GM12878 (cell line): ENCODE measurements at regions of chr5 and their contacts with region 1.

Region 1: DNA sequence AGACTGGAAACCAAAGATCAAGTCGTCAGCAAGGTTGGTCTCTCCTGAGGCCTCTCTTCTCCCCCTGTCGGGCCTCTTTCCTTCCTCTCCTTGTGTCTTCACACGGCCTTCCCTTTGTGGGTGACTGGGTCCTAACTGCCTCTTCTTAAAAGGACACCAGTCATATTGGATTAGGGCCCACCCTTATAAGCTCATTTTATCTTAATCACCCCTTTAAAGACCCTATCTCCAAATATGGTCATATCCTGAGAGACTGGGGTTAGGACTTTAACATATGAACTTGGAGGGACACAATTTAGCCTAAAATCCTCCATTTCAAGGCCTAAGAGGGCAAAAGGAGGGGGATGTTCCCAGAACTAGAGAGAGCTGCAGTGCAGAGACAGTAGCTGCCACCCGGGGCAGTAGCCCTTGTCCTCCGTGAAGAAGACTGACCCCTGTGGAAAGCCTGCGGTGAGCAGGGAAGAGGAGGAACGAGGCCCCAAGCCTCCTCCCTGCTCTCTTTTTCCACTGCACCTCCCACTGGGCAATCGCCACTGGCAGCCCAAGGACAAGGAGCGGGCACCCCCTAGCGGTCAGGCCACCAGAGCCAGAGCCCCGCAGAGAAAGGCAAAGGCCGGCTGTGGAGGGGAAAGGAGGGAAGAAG is 34.9 kb downstream of the CFAP90 start:
- DNase-seq: peak; percentile 20
- ATAC-seq: peak; percentile 99
- H3K4me3 ChIP-seq: no peak overlapping the region
- H3K27ac ChIP-seq: no peak overlapping the region
- H3K4me1 ChIP-seq: peaks cover 5% of the 10 kb centered on the region
- H3K27me3 ChIP-seq: no peaks in the 10 kb centered on the region; a peak in 1 of 4 replicates
- CTCF ChIP-seq: peak; percentile 97 to 99 (median 97)
- EP300 ChIP-seq: no peak
- POLR2A ChIP-seq: no peak
- RAD21 ChIP-seq: peak; percentile 94

Region 2: DNA sequence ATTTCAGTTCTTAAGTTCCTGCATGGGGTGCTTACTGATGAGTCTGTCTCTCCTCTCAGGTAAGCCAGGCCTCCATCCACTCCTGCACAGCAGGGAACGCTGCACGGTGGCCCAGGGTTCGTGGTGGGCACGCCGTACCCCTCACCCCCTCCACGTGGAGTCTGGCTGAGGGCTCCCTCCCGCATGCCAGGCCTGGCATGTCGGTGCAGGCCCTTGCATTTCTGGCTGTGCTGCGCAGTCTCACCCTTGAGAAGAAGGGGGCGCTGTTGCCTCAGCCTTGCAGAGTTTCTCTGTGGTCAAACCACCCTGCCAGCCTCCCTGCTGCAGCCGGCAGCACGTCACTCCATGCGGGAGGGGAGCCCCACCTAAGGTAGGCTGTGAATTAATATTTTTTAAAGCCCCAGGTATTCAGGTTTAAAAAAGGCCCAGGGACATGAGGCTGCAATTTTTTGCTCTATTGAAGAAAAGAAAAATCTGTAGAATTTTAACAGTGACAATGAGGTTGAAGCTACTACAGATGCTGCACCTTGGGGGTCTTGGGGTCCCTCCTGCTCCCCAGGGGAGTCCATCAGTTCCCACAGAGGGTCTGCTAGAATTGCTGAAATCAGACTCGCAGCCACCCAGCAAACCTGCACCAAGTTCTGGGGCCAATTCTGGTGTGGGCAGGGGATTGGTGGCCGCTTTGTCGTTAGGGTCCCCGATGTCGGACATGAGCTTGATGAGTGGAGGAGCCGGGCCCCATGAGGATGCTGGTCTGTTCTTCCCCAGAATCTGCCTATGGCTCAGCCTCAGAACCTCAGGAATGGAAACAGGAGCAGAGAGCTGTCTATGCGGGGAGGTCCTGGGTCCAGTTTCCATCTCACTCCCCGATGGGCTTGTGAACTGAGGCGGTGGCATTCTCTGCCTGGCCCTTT is 1050.1 kb before region 1 on chr5:
- CTCF ChIA-PET with region 1: no interaction called
- POLR2A ChIA-PET with region 1: no interaction called
- RAD21 ChIA-PET with region 1: interaction called, 4 read pairs
- SMC1A ChIA-PET with region 1: no interaction called
- in situ Hi-C with region 1: no loop called
- intact Hi-C with region 1: loop called (anchors 5 kb)
- DNase-seq: peak; percentile 31
- ATAC-seq: peak; percentile 95
- H3K4me3 ChIP-seq: no peak overlapping the region
- H3K27ac ChIP-seq: no peak overlapping the region
- H3K4me1 ChIP-seq: no peaks in the 10 kb centered on the region
- H3K27me3 ChIP-seq: no peaks in the 10 kb centered on the region
- CTCF ChIP-seq: peak; percentile 65 to 88 (median 84)
- EP300 ChIP-seq: no peak
- POLR2A ChIP-seq: no peak
- RAD21 ChIP-seq: peak; percentile 72

Region 3: DNA sequence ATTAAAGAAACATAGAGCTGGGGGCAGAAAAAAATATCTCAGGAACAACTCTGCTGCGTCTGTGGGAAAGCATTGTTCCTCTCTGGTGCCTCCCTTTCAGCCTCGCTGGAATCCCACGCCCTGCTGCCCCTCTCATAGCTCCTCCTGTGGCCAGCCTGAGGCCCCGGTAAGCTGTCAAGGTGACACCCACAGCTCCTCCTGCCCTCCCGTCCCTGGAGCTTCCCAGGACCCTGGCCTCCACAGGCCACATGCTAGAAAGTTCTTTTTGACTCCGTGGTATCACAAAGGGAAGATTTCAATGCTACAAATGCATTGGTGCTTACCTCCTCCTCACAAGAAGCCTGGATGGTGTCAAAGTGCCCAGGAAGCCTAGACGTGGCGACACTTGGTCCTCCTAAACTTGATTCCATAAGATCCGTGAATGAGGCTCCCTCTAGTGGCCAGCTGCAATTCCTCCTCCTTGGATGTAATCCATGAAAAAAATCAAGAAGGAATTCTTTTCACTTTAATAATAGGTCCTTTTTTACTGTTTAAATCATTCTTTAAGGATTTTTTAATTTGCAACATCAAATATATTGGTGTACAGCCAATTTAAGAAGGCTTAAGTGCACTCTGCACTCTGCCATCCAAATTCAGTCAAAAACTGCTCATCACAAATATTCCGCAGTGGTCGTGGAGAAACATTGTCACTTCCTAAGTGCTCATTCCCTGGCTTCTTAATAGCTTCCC is 70.0 kb before region 1 on chr5:
- CTCF ChIA-PET with region 1: interaction called, 20 read pairs
- POLR2A ChIA-PET with region 1: no interaction called
- RAD21 ChIA-PET with region 1: interaction called, 3 read pairs
- SMC1A ChIA-PET with region 1: interaction called, 3 read pairs
- in situ Hi-C with region 1: no loop called
- intact Hi-C with region 1: no loop called
- DNase-seq: no peak
- ATAC-seq: peak; percentile 61
- H3K4me3 ChIP-seq: no peak overlapping the region
- H3K27ac ChIP-seq: no peak overlapping the region
- H3K4me1 ChIP-seq: no peaks in the 10 kb centered on the region
- H3K27me3 ChIP-seq: no peaks in the 10 kb centered on the region
- CTCF ChIP-seq: peak; percentile 59 to 83 (median 81)
- EP300 ChIP-seq: no peak
- POLR2A ChIP-seq: no peak
- RAD21 ChIP-seq: peak; percentile 62

Region 4: GRCh38 chr5:7762267-7762666 is 53.7 kb before region 1 on chr5:
- CTCF ChIA-PET with region 1: interaction called, 39 read pairs
- POLR2A ChIA-PET with region 1: no interaction called
- RAD21 ChIA-PET with region 1: interaction called, 5 read pairs
- SMC1A ChIA-PET with region 1: interaction called, 7 read pairs
- in situ Hi-C with region 1: no loop called
- intact Hi-C with region 1: loop called (anchors 2 kb)
- DNase-seq: no peak
- ATAC-seq: peak; percentile 78
- H3K4me3 ChIP-seq: no peak overlapping the region
- H3K27ac ChIP-seq: no peak overlapping the region
- H3K4me1 ChIP-seq: no peaks in the 10 kb centered on the region
- H3K27me3 ChIP-seq: no peaks in the 10 kb centered on the region; a peak in 1 of 4 replicates
- CTCF ChIP-seq: peak in 2 of 3 experiments; percentile 35 to 44; a peak in 3 of 6 replicates
- EP300 ChIP-seq: no peak
- POLR2A ChIP-seq: no peak
- RAD21 ChIP-seq: peak; percentile 45; the same call in 1 of the 2 replicates

Region 5: GRCh38 chr5:7805379-7805778 is 10.6 kb before region 1 on chr5:
- CTCF ChIA-PET with region 1: interaction called, 29 read pairs
- POLR2A ChIA-PET with region 1: no interaction called
- RAD21 ChIA-PET with region 1: no interaction called
- SMC1A ChIA-PET with region 1: interaction called, 4 read pairs
- in situ Hi-C with region 1: no loop called
- intact Hi-C with region 1: no loop called
- DNase-seq: no peak
- ATAC-seq: peak; percentile 58
- H3K4me3 ChIP-seq: no peak overlapping the region
- H3K27ac ChIP-seq: no peak overlapping the region
- H3K4me1 ChIP-seq: no peaks in the 10 kb centered on the region
- H3K27me3 ChIP-seq: no peaks in the 10 kb centered on the region
- CTCF ChIP-seq: peak; percentile 32 to 42 (median 36); a peak in 4 of 6 replicates
- EP300 ChIP-seq: no peak
- POLR2A ChIP-seq: no peak
- RAD21 ChIP-seq: peak; percentile 42